Heart right ventricle (tissue), 16 donors: ENCODE measurements at regions of chr18 and their contacts with region 1.

Region 1: DNA sequence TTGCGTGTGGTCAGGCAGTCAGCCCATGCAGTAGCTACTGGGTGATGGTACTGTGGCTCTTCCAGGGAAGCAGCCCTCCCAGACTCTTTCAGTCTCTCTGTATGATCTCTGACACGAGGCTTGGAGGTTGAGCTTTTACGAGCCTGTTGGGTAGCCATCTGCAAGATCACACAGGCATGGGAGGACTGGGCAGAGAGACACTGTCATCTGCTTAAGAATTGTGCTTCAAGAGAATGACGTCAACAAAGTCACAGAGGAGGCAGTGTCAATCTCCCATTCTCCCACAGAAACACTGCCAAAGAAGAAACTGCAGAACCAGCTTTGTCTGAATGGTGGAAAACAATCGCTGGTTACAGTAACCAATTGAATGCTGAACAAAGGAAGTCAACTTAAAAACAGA is 78.4 kb upstream of the MC2R start:
- DNase-seq: no peak
- ATAC-seq: no peak
- H3K4me3 ChIP-seq: no peak overlapping the region
- H3K27ac ChIP-seq: no peak overlapping the region
- H3K4me1 ChIP-seq: no peaks in the 10 kb centered on the region
- H3K27me3 ChIP-seq: no peaks in the 10 kb centered on the region
- CTCF ChIP-seq: no peak

Region 2: GRCh38 chr18:13940326-13940725 is 53.4 kb before region 1 on chr18:
- intact Hi-C with region 1: loop called in 1 of 10 experiments (anchors 10 kb)
- DNase-seq: no peak
- ATAC-seq: no peak
- H3K4me3 ChIP-seq: no peak overlapping the region
- H3K27ac ChIP-seq: no peak overlapping the region
- H3K4me1 ChIP-seq: no peaks in the 10 kb centered on the region
- H3K27me3 ChIP-seq: peaks cover 0 to 3% (median 0%) of the 10 kb centered on the region in 7 donors
- CTCF ChIP-seq: no peak